ENCODE measurements at regions of chr19 and their contacts with region 1.

Region 1: GRCh38 chr19:56748378-56748777 is 76.8 kb upstream of the ZNF835 start:
- DNase-seq: peak; percentile 75
- H3K4me3 ChIP-seq: no peak overlapping the region
- H3K27ac ChIP-seq: no peak overlapping the region
- H3K4me1 ChIP-seq: peaks cover 0 to 8% (median 7%) of the 10 kb centered on the region in 4 donors
- H3K27me3 ChIP-seq: no peaks in the 10 kb centered on the region
- CTCF ChIP-seq: peak; percentile 56 to 70 (median 65)
- EP300 ChIP-seq: no peak
- POLR2A ChIP-seq: no peak

Region 2: GRCh38 chr19:56053596-56053995 is 694.8 kb before region 1 on chr19:
- intact Hi-C with region 1: no loop called
- DNase-seq: no peak
- H3K4me3 ChIP-seq: no peak overlapping the region
- H3K27ac ChIP-seq: no peak overlapping the region
- H3K4me1 ChIP-seq: no peaks in the 10 kb centered on the region
- H3K27me3 ChIP-seq: peaks cover 0 to 32% (median 0%) of the 10 kb centered on the region in 4 donors
- CTCF ChIP-seq: no peak
- EP300 ChIP-seq: no peak
- POLR2A ChIP-seq: no peak

Region 3: DNA sequence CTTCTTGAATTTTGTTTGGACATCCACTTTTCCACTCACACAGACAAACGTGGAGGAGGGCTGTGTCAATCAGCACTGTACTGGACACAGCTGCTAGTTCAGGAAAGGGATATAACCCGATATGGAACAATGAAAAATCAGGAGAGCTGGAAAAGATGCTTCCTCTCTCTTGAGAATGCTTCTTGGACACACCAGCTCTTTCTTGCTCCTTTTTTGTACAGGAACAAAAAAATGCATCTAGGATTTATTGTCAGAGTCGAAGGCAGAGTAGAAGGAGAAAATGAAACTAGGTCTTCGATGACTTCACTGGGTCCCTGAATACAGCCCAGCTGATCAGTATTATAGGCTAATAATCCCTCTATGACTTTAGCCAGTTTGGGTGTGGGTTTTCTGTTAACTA is 30.0 kb after region 1 on chr19:
- intact Hi-C with region 1: no loop called
- DNase-seq: no peak
- H3K4me3 ChIP-seq: no peak overlapping the region
- H3K27ac ChIP-seq: no peak overlapping the region
- H3K4me1 ChIP-seq: no peaks in the 10 kb centered on the region
- H3K27me3 ChIP-seq: no peaks in the 10 kb centered on the region
- CTCF ChIP-seq: no peak
- EP300 ChIP-seq: no peak
- POLR2A ChIP-seq: no peak

Region 4: DNA sequence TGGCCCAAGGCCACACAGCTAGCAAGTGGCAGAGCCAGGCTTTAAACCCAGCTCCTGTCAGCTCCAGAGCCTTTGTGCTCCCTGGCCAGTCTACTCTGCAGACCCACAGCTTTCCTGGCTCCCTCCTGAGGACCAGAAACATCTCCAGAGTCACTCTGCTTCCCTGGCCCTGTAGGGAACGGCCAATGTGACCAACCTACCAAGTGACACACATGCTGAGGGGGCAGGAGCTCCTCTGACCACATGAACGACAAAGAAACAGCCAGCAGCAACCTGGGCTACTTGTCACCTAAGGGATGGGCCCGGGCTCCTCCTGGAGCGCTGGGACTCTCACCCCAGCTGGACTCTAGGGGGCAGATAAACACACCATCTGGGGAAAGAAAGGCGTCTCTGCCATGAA is 72.8 kb after region 1 on chr19:
- intact Hi-C with region 1: no loop called
- DNase-seq: peak; percentile 57
- H3K4me3 ChIP-seq: no peak overlapping the region
- H3K27ac ChIP-seq: no peak overlapping the region
- H3K4me1 ChIP-seq: no peaks in the 10 kb centered on the region
- H3K27me3 ChIP-seq: no peaks in the 10 kb centered on the region
- CTCF ChIP-seq: no peak
- EP300 ChIP-seq: no peak
- POLR2A ChIP-seq: no peak

Region 5: GRCh38 chr19:57099199-57099661 is 350.9 kb after region 1 on chr19:
- intact Hi-C with region 1: loop called (anchors 1 kb)
- DNase-seq: no peak
- H3K4me3 ChIP-seq: no peak overlapping the region
- H3K27ac ChIP-seq: no peak overlapping the region
- H3K4me1 ChIP-seq: peaks cover 4 to 26% (median 17%) of the 10 kb centered on the region in 4 donors
- H3K27me3 ChIP-seq: peaks cover 0 to 26% (median 0%) of the 10 kb centered on the region in 4 donors
- CTCF ChIP-seq: peak; percentile 86 to 94 (median 91)
- EP300 ChIP-seq: no peak
- POLR2A ChIP-seq: no peak

Measured in esophagus muscularis mucosa (tissue), 4 donors.